ENCODE measurements at regions of chr1 and their contacts with region 1.

Region 1: DNA sequence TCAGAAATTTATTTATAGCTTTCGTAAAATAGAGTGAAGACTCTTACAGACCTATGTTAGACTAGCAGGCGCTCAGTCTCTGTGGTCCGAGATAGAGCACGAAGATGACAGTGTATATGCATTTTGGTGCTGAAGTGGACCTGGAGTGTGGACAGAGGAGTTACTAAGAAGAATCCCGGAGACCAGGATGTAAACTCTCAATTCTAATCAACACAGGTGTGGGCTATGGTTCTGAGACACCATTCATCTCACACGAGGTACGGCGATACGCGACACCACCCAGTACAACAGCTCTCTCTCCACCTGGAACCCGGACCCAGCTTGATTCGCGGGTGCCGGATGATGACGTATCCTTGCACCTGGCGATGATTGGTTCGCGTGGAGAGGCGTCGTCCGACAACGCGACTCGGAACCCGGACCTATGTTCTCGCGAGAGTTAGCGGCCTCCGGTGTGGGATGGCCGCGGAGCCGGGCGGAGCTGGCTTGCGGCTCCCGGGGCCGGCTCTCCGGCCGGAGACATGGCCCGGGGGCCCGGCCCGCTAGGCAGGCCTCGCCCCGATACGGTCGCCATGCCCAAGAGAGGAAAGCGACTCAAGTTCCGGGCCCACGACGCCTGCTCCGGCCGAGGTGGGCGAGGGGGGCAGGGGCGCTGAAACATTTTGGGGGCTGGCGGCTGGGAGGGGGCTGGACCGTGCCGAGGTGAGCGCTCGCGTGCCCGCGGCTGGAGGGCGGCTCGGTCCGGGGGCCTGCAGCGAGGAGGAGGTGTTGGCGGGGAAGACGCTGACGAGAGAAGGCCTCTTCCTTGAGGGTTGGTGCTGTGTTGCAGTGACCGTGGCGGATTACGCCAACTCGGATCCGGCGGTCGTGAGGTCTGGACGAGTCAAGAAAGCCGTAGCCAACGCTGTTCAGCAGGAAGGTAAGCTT is at the start of gene TMEM183A:
- DNase-seq: peak; percentile 98
- ATAC-seq: peak; percentile 96
- H3K4me3 Mint-ChIP-seq: peak within 1 kb of the TSS; percentile 99
- H3K27ac Mint-ChIP-seq: peak within 1 kb of the TSS; percentile 98
- H3K4me1 Mint-ChIP-seq: peaks cover 23% of the 10 kb centered on the region
- H3K27me3 Mint-ChIP-seq: no peaks in the 10 kb centered on the region
- total RNA-seq, gene TMEM183A: 68.6 to 71.0 TPM

Region 2: DNA sequence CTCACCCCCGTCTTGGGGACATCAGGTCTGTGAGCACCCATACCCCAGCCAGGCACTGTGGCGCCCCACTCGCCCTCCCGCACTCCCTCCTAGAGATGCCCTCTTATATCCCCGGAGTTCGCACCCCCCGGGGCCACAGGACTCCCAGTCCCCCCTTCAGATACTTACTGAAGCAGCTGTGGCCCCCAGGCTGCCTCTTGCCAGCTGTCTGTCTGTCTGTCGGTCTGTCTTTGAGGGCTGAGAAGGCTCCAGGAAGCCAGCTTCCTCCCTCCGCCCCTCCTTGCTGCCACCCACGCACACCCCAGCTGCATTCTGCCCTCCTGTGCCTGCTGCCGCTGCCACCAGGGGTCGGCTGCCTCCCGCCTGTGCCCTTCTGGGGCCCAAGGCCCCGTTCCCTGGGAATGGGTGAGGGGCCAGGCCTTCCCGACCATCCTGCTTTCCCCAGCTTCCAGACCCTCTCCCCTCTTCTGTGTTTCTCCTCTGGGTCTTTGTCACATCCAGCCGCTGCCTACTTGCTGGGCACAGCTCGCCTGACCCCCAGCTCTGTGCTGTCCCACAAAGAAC is 846.8 kb before region 1 on chr1 and contains the start of gene PTPN7:
- CTCF ChIA-PET with region 1: interaction called, 4 read pairs
- POLR2A ChIA-PET with region 1: no interaction called
- intact Hi-C with region 1: loop called in 1 of 2 experiments (anchors 10 kb)
- DNase-seq: peak; percentile 98
- ATAC-seq: peak; percentile 69
- H3K4me3 Mint-ChIP-seq: peak within 1 kb of the TSS; percentile 97
- H3K27ac Mint-ChIP-seq: peak within 1 kb of the TSS; percentile 99
- H3K4me1 Mint-ChIP-seq: peaks cover 80% of the 10 kb centered on the region
- H3K27me3 Mint-ChIP-seq: no peaks in the 10 kb centered on the region
- total RNA-seq, gene PTPN7: 188 to 221 TPM

Region 3: GRCh38 chr1:202926720-202927491 is 80.3 kb before region 1 on chr1 and contains the start of gene KLHL12:
- CTCF ChIA-PET with region 1: interaction called, 3 read pairs
- POLR2A ChIA-PET with region 1: interaction called, 4 read pairs
- intact Hi-C with region 1: loop called (anchors 1 kb)
- DNase-seq: peak; percentile 98
- ATAC-seq: peak; percentile 96
- H3K4me3 Mint-ChIP-seq: peak within 1 kb of the TSS; percentile 86
- H3K27ac Mint-ChIP-seq: peak within 1 kb of the TSS; percentile 85
- H3K4me1 Mint-ChIP-seq: peaks cover 24% of the 10 kb centered on the region
- H3K27me3 Mint-ChIP-seq: no peaks in the 10 kb centered on the region
- total RNA-seq, gene KLHL12: 32.1 to 39.1 TPM

Region 4: GRCh38 chr1:203026031-203026989 is 19.1 kb after region 1 on chr1 and contains the start of gene PPFIA4:
- CTCF ChIA-PET with region 1: interaction called, 6 read pairs
- POLR2A ChIA-PET with region 1: interaction called, 6 read pairs
- intact Hi-C with region 1: loop called (anchors 1 to 2 kb)
- DNase-seq: peak; percentile 95
- ATAC-seq: peak; percentile 95
- H3K4me3 Mint-ChIP-seq: peak within 1 kb of the TSS; percentile 82
- H3K27ac Mint-ChIP-seq: peak within 1 kb of the TSS; percentile 84
- H3K4me1 Mint-ChIP-seq: peaks cover 19% of the 10 kb centered on the region
- H3K27me3 Mint-ChIP-seq: peaks cover 4% of the 10 kb centered on the region
- total RNA-seq, gene PPFIA4: 51.2 to 56.4 TPM

Region 5: DNA sequence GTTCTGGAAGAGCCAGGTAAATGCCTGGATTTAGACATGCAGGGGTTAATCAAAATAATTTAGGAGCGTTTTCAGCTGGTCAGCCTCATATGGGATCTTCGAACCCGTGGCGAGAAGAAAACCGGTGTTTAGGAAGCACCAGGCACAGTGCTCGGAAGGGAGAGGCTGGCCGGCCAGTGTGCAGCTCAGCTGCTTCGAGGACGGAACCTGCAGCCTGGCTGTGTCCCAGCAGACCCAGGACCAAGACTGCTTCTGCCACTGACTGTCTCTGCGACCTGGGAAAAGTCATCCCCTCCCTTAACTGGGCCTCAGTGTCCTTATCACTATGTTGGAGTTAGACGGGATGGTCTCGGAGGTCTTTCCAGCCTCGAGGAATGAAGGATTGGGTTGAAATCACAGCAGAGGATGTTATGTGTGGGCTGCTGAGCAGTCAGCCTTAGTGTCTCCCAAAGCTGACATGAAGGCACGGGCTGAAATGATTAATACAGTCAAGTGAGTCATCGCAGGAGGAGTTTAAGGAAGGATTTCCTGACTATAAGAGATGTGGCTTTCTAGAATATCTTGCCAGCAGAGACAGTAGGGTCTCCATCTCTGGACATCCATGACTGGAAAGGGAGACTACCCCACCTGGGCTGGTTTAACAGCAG is 39.9 kb after region 1 on chr1:
- CTCF ChIA-PET with region 1: no interaction called
- POLR2A ChIA-PET with region 1: no interaction called
- intact Hi-C with region 1: no loop called
- DNase-seq: no peak
- ATAC-seq: peak; percentile 76
- H3K4me3 Mint-ChIP-seq: no peak overlapping the region
- H3K27ac Mint-ChIP-seq: no peak overlapping the region
- H3K4me1 Mint-ChIP-seq: peaks cover 3% of the 10 kb centered on the region
- H3K27me3 Mint-ChIP-seq: peaks cover 7% of the 10 kb centered on the region

Region 6: GRCh38 chr1:203112301-203112874 is 105.2 kb after region 1 on chr1:
- CTCF ChIA-PET with region 1: no interaction called
- POLR2A ChIA-PET with region 1: no interaction called
- intact Hi-C with region 1: no loop called
- DNase-seq: no peak
- ATAC-seq: no peak
- H3K4me3 Mint-ChIP-seq: no peak overlapping the region
- H3K27ac Mint-ChIP-seq: no peak overlapping the region
- H3K4me1 Mint-ChIP-seq: no peaks in the 10 kb centered on the region
- H3K27me3 Mint-ChIP-seq: peaks cover 31% of the 10 kb centered on the region